ENCODE measurements at regions of chr3 and their contacts with region 1.

Region 1: DNA sequence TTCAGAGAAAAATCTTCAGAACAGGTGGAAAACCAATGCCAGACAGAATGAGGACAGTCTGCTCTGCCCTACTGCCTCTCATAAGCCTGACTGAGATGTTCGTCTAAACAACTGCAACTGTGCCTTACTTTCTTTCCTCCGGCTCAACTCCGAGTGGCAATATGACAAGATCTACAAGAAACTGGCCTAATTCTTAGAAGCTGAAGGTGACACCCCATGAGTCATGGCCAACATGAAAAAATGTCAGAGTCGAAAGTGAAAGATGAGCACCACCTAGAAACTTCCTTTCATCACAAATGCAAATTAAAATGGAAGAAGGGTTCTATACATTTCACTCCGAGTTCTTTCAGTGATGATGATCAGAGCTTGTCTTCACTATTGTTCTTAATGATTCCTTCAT is 12.9 kb downstream of the PCYT1A start:
- DNase-seq: peak in 8 of 9 donors; percentile 20 to 72 (median 42)
- ATAC-seq: peak; percentile 91
- H3K4me3 ChIP-seq: peak overlapping the region; percentile 7
- H3K4me3 Mint-ChIP-seq: peak overlapping the region; percentile 41 to 84 (median 74)
- H3K27ac ChIP-seq: peak overlapping the region; percentile 50
- H3K27ac Mint-ChIP-seq: peak overlapping the region; percentile 57 to 96 (median 89)
- H3K4me1 ChIP-seq: peaks cover 10 to 21% of the 10 kb centered on the region in 2 donors
- H3K4me1 Mint-ChIP-seq: peaks cover 19 to 62% (median 37%) of the 10 kb centered on the region in 7 donors
- H3K27me3 ChIP-seq: no peaks in the 10 kb centered on the region
- H3K27me3 Mint-ChIP-seq: no peaks in the 10 kb centered on the region

Region 2: GRCh38 chr3:196632046-196632751 is 357.6 kb after region 1 on chr3:
- CTCF ChIA-PET with region 1: no interaction called
- POLR2A ChIA-PET with region 1: no interaction called
- intact Hi-C with region 1: loop called in 1 of 2 experiments (anchors 10 kb)
- DNase-seq: peak; percentile 69 to 91 (median 88)
- ATAC-seq: peak; percentile 89
- H3K4me3 ChIP-seq: peak overlapping the region; percentile 48
- H3K4me3 Mint-ChIP-seq: peak overlapping the region; percentile 80 to 96 (median 90)
- H3K27ac ChIP-seq: peak overlapping the region; percentile 78
- H3K27ac Mint-ChIP-seq: peak overlapping the region; percentile 93 to 99 (median 97)
- H3K4me1 ChIP-seq: peaks cover 30 to 31% of the 10 kb centered on the region in 2 donors
- H3K4me1 Mint-ChIP-seq: peaks cover 31 to 74% (median 62%) of the 10 kb centered on the region in 7 donors
- H3K27me3 ChIP-seq: no peaks in the 10 kb centered on the region
- H3K27me3 Mint-ChIP-seq: no peaks in the 10 kb centered on the region

Measured in naive thymus-derived CD4-positive, alpha-beta T cell (primary cell).